ENCODE measurements at regions of chr4 and their contacts with region 1.

Region 1: DNA sequence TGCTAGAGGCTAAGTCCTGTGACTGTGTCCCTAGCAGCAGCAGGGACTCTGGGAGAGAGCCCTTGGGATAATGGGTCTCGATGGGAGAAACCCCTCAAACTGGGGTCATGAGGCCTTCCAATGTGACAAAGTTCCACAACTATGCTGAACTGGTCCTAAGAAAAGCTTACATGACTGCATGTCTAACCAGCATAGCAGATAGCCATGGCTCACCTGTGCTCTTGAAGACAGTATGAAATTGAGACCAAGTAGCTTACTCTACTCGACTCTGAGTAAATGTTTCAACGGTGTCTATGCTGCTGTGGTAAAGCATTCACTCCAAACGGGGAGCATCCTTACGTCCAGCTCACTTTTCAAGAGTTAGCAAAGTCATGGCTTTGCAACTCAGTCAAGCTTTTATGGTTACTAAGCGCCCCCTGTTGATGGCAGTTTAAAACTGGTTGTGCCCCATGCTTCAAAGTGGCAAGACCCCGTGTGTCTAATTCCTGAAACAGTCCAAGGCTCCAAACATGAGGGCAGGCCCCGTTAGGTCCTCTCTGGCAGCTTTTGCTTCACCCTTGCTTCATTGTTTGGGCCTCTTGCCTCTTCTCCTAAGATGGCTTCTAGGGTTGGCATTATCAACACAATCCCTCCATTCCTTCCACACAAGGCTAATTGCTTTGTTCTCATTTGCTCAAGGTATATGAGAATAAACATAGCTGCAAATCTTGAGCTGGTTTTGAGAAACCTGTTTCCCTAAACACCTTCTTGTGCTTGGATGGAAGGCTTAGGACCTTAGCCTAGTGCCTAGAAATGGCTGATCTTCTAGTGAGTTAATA is 46.6 kb downstream of the CCNG2 start:
- DNase-seq: peak; percentile 82
- ATAC-seq: peak; percentile 70
- H3K4me3 Mint-ChIP-seq: no peak overlapping the region
- H3K27ac Mint-ChIP-seq: no peak overlapping the region
- H3K4me1 Mint-ChIP-seq: peaks cover 13% of the 10 kb centered on the region
- H3K27me3 Mint-ChIP-seq: peaks cover 5% of the 10 kb centered on the region
- CTCF ChIP-seq: peak; percentile 74

Region 2: DNA sequence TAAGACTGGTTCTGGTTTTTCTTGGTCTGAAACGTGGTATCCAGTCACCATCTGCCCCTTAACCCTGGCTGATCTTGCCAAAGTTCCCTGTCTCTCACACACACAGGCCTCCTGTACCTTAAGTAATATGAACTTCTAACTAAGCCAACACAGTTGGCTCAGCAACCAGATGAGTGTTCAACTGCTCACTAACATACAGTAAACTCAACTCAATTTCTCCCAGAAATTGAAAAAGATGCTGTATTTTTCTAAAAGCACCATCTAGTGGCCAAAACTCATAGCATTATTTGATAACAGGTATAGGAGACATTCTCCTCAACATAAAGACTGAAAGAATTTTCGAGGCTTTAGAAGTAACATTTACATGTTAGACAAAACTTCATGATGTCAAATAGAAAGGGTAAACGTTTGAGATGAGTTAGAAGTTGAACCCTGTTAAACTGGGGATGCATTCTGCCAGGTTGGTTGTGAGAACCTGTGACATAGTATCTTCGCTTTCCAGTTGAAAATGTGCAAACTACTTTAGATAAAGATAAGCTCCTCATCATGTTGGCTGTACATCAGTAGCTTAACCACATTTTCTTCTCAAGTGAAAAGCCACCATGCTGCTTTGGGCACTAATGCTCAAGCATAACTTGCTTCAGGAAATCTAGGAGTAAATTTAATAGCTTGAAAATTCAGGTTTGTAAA is 159.0 kb before region 1 on chr4:
- CTCF ChIA-PET with region 1: interaction called, 85 read pairs
- POLR2A ChIA-PET with region 1: no interaction called
- intact Hi-C with region 1: no loop called
- DNase-seq: no peak
- ATAC-seq: peak; percentile 62
- H3K4me3 Mint-ChIP-seq: no peak overlapping the region
- H3K27ac Mint-ChIP-seq: no peak overlapping the region
- H3K4me1 Mint-ChIP-seq: peaks cover 15% of the 10 kb centered on the region
- H3K27me3 Mint-ChIP-seq: no peaks in the 10 kb centered on the region
- CTCF ChIP-seq: peak; percentile 63

Region 3: DNA sequence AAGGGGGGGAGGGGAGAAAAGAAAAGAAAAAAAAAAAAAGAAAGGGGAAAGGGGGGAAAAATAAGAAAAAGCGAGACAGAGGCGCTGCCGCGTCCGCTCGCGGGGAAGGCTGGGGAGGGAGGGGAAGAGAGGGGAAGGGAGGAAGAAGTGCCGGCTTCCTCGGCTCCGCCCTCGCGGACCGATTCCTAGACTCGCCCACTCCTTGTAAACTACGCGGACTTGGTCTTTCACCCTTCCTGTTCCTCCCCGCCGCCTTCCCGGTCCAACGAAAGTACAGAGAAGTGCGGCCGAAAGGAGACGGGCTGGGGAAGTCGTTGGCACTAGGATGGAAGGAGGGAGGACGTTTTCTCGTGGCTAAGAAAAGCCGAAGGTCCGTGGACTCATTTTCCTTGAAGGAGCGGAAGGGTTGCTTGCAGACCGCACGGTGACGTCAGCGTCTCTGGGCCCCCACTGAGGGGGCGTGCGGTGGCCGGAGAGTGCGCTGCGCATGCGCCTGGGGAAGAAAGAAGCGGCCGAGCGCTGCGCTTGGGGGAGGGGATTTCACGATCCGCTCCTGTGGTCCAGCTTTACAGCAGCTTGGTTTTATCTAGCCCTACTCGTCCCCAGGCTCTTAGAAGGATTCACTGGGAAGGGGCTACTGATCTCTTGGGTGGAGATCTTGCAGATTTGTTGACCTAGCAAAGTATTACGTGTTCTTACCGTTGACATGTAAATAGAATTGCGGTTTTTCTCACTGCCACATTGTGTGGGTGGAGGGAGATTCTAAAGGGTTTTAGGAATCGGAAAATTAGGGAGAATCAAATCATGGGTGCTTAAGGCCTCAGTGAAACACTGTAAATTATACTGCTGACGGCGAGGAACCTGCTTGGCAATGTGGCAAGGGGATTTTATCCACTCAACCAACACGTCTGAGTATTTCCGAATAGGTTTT is 127.5 kb before region 1 on chr4 and contains the start of gene CCNI:
- CTCF ChIA-PET with region 1: interaction called, 26 read pairs
- POLR2A ChIA-PET with region 1: interaction called, 3 read pairs
- intact Hi-C with region 1: loop called (anchors 5 kb)
- DNase-seq: peak; percentile 92
- ATAC-seq: peak; percentile 77
- H3K4me3 Mint-ChIP-seq: no peak within 1 kb of the TSS
- H3K27ac Mint-ChIP-seq: peak within 1 kb of the TSS; percentile 100
- H3K4me1 Mint-ChIP-seq: peaks cover 36% of the 10 kb centered on the region
- H3K27me3 Mint-ChIP-seq: no peaks in the 10 kb centered on the region
- CTCF ChIP-seq: no peak
- total RNA-seq, gene CCNI: 257 to 272 TPM

Region 4: GRCh38 chr4:77104791-77105540 is 98.6 kb before region 1 on chr4:
- CTCF ChIA-PET with region 1: interaction called, 20 read pairs
- POLR2A ChIA-PET with region 1: no interaction called
- intact Hi-C with region 1: no loop called
- DNase-seq: no peak
- ATAC-seq: no peak
- H3K4me3 Mint-ChIP-seq: no peak overlapping the region
- H3K27ac Mint-ChIP-seq: no peak overlapping the region
- H3K4me1 Mint-ChIP-seq: peaks cover 6% of the 10 kb centered on the region
- H3K27me3 Mint-ChIP-seq: peaks cover 3% of the 10 kb centered on the region
- CTCF ChIP-seq: no peak

Region 5: GRCh38 chr4:77156533-77156911 is 47.1 kb before region 1 on chr4:
- CTCF ChIA-PET with region 1: interaction called, 21 read pairs
- POLR2A ChIA-PET with region 1: interaction called, 3 read pairs
- intact Hi-C with region 1: no loop called
- DNase-seq: peak; percentile 97
- ATAC-seq: peak; percentile 92
- H3K4me3 Mint-ChIP-seq: peak overlapping the region; percentile 93
- H3K27ac Mint-ChIP-seq: peak overlapping the region; percentile 97
- H3K4me1 Mint-ChIP-seq: peaks cover 33% of the 10 kb centered on the region
- H3K27me3 Mint-ChIP-seq: no peaks in the 10 kb centered on the region
- CTCF ChIP-seq: no peak

Region 6: GRCh38 chr4:77215107-77215506 is 11.5 kb after region 1 on chr4:
- CTCF ChIA-PET with region 1: interaction called, 34 read pairs
- POLR2A ChIA-PET with region 1: no interaction called
- intact Hi-C with region 1: no loop called
- DNase-seq: no peak
- ATAC-seq: no peak
- H3K4me3 Mint-ChIP-seq: no peak overlapping the region
- H3K27ac Mint-ChIP-seq: no peak overlapping the region
- H3K4me1 Mint-ChIP-seq: no peaks in the 10 kb centered on the region
- H3K27me3 Mint-ChIP-seq: no peaks in the 10 kb centered on the region
- CTCF ChIP-seq: no peak